GM10248 (cell line): ENCODE measurements at regions of chr4 and their contacts with region 1.

Region 1: DNA sequence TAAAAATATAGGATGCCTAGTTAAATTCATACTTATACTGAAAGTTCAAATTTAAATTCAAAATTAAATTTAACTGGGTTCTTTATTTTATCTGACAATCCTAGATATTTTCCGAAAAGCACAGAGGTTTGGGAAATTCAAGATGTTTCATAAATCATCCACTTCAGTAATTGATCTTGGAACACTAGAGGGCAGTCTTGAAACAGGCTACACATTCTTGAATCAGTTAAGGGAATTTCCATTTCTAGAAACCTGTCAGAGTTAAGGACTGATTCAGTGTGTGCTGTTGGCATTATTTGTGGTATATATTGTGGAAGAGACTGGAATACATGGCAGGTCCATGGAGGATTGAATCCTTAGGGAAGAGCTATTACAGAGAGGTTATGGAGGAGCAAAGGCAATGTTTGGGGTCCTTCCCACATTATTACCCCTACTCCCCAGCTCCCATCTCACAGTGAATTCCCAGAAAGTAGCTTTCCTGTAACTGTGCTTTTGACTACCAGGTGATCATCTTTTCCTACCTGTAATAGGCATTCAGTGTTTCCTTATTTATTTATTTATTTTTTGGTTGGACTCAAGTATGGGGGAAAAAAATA is 92.9 kb downstream of the EGF start:
- DNase-seq: peak; percentile 71
- CTCF ChIP-seq: peak; percentile 64

Region 2: GRCh38 chr4:109811707-109812106 is 193.9 kb before region 1 on chr4:
- CTCF ChIA-PET with region 1: no interaction called
- POLR2A ChIA-PET with region 1: no interaction called
- DNase-seq: no peak
- CTCF ChIP-seq: no peak

Region 3: DNA sequence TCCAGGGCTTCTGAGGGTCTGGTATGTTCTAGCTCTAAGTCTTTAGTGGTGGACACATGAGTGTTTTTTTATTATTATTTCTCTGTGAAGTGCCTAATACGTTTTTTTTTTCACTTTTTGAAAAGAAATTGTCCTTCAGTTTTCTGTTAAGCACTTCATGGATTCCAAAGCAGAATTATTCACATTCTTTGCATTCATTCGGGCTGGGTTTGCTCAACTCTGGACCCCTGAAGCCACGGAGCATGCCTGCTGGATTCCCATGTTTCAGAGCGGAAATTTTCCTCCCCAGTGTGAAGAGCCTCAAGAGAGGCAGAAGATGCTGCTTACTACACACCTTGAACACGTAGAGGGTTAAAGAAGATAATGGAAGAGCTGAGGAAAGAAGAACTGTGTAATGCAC is 14.6 kb after region 1 on chr4:
- CTCF ChIA-PET with region 1: interaction called, 25 read pairs
- POLR2A ChIA-PET with region 1: no interaction called
- DNase-seq: no peak
- CTCF ChIP-seq: no peak

Region 4: DNA sequence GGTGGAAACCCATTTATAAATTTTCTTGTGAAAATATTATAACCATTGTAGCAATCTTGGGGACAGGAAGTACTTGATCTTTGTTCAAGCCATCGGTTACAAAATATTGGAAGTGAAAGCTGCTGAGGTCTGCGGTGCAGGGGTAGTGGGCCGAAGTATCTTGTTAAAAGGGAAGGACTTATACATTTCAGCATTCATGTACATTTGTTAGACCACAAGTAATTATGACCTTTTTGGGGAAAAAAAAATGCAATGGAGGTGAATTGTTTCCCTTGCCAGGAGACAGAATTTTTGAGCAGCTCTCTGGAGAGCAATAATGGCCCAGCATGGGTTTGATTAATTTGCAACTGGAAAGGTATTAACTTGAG is 28.5 kb after region 1 on chr4:
- CTCF ChIA-PET with region 1: interaction called, 10 read pairs
- POLR2A ChIA-PET with region 1: no interaction called
- DNase-seq: peak; percentile 57
- CTCF ChIP-seq: no peak